ENCODE measurements at regions of chr1 and their contacts with region 1.

Region 1: GRCh38 chr1:58883037-58883887 is 99.4 kb upstream of the JUN start:
- DNase-seq: peak; percentile 87 to 98
- H3K4me3 ChIP-seq: peak overlapping the region; percentile 16; the same call in 1 of the 2 replicates
- H3K27ac ChIP-seq: peak overlapping the region; percentile 99
- H3K4me1 ChIP-seq: peaks cover 68% of the 10 kb centered on the region
- H3K27me3 ChIP-seq: no peaks in the 10 kb centered on the region
- CTCF ChIP-seq: no peak

Region 2: DNA sequence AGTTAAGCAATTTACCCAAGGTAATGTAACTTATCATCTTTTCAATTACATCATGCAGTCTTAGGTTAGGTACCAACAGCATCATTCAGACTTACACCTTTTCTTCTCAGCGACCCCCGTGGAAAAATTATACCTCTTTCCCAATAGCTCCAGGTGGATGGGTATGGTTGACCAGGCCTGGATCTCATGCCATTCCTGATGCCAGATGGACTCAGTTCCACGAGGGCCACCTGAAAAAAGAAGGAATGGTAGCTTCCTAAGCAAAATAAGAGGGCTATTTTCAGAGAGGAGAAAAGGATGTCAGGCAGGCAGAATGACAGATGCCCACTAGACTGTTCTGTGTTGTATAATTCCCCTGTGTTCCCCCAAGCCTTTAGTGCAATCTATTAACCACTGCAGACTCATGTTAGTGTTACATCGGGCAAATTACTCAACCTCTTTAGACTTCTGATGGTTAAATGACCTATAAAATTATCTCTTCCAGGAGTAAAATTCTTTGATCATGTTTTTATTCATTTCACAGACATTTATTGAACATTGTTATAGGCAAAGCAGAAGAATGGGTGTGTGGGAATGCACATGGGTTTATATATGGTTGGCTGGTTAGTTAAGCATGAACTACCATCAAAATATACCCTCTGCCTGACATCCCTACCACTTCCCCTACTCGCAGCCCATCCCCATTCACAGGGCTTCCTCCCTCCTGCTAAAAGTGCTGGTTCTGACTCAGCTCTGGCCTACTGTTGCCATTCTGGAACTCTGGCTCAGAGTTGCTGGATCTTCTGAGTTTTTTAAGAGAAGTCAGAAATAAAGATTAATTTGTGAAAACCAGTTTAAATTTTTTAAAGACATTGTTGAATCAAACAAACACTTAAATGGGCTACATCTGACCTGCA is 172.8 kb before region 1 on chr1:
- CTCF ChIA-PET with region 1: no interaction called
- POLR2A ChIA-PET with region 1: no interaction called
- intact Hi-C with region 1: no loop called
- DNase-seq: no peak
- H3K4me3 ChIP-seq: no peak overlapping the region
- H3K27ac ChIP-seq: no peak overlapping the region
- H3K4me1 ChIP-seq: 0 out of 2 replicates have a peak, but pooled peaks cover 5% of the 10 kb centered on the region
- H3K27me3 ChIP-seq: no peaks in the 10 kb centered on the region
- CTCF ChIP-seq: no peak

Region 3: GRCh38 chr1:58848818-58849411 is 34.3 kb before region 1 on chr1:
- CTCF ChIA-PET with region 1: no interaction called
- POLR2A ChIA-PET with region 1: interaction called, 3 read pairs
- intact Hi-C with region 1: loop called (anchors 1 kb)
- DNase-seq: peak; percentile 95 to 98
- H3K4me3 ChIP-seq: peak overlapping the region; percentile 27
- H3K27ac ChIP-seq: peak overlapping the region; percentile 92
- H3K4me1 ChIP-seq: peaks cover 59% of the 10 kb centered on the region
- H3K27me3 ChIP-seq: no peaks in the 10 kb centered on the region
- CTCF ChIP-seq: no peak; the same call in 1 of the 2 replicates

Region 4: DNA sequence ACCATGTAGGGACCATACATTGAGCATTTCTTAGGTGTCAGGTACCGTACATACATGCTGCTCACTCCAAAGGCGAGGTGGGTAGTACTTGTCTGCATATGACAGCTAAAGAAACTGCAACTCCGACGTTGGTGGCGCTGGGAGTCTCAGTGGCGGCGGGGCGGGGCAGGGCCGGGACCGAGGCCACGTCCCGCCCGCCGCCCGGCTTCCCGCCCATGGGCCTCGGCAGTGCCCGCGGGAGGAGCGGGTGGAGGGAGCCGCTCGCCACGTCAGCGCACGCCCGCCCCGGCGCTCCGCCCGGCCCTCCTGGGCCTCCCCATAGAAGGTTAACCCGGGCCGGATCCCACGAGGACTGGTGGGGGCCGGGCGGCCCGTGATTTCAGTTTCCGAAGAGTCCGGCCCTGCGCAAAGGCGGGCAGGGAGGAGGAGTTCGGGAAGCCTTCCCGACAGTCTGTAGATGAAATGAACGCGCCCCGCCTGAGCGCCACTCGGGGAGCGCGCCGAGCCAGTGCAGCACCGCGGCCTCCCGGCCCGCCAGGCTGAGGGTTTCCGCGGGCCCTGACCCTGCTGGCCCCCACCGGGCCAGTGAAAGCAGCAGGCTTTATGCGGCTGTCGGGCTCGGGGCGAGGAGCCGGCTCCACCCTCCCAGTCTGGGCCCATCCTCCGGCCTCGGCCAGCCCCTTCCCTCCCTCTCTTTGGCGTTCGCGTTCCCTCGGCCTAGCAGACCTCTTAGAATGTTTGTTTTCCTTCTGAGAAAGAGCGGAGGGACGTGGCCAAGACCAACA is 20.4 kb after region 1 on chr1:
- CTCF ChIA-PET with region 1: no interaction called
- POLR2A ChIA-PET with region 1: interaction called, 5 read pairs
- intact Hi-C with region 1: loop called (anchors 1 kb)
- DNase-seq: peak; percentile 81 to 94
- H3K4me3 ChIP-seq: peak overlapping the region; percentile 63
- H3K27ac ChIP-seq: peak overlapping the region; percentile 90
- H3K4me1 ChIP-seq: peaks cover 69% of the 10 kb centered on the region
- H3K27me3 ChIP-seq: no peaks in the 10 kb centered on the region
- CTCF ChIP-seq: no peak

Region 5: GRCh38 chr1:59025898-59026426 is 142.7 kb after region 1 on chr1:
- CTCF ChIA-PET with region 1: no interaction called
- POLR2A ChIA-PET with region 1: no interaction called
- intact Hi-C with region 1: loop called (anchors 1 kb)
- DNase-seq: no peak
- H3K4me3 ChIP-seq: no peak overlapping the region
- H3K27ac ChIP-seq: no peak overlapping the region
- H3K4me1 ChIP-seq: peaks cover 46% of the 10 kb centered on the region
- H3K27me3 ChIP-seq: no peaks in the 10 kb centered on the region
- CTCF ChIP-seq: no peak

Region 6: GRCh38 chr1:59414406-59415133 is 531.3 kb after region 1 on chr1:
- CTCF ChIA-PET with region 1: no interaction called
- POLR2A ChIA-PET with region 1: no interaction called
- intact Hi-C with region 1: no loop called
- DNase-seq: no peak
- H3K4me3 ChIP-seq: no peak overlapping the region
- H3K27ac ChIP-seq: no peak overlapping the region
- H3K4me1 ChIP-seq: no peaks in the 10 kb centered on the region
- H3K27me3 ChIP-seq: no peaks in the 10 kb centered on the region
- CTCF ChIP-seq: no peak

Region 7: GRCh38 chr1:59432531-59433439 is 549.5 kb after region 1 on chr1:
- CTCF ChIA-PET with region 1: no interaction called
- POLR2A ChIA-PET with region 1: no interaction called
- intact Hi-C with region 1: loop called (anchors 5 kb)
- DNase-seq: no peak
- H3K4me3 ChIP-seq: no peak overlapping the region
- H3K27ac ChIP-seq: no peak overlapping the region
- H3K4me1 ChIP-seq: peaks cover 34% of the 10 kb centered on the region
- H3K27me3 ChIP-seq: no peaks in the 10 kb centered on the region
- CTCF ChIP-seq: no peak

Measured in PC-9 (cell line).